OCI-LY7 (cell line): ENCODE measurements at regions of chr10 and their contacts with region 1.

Region 1: DNA sequence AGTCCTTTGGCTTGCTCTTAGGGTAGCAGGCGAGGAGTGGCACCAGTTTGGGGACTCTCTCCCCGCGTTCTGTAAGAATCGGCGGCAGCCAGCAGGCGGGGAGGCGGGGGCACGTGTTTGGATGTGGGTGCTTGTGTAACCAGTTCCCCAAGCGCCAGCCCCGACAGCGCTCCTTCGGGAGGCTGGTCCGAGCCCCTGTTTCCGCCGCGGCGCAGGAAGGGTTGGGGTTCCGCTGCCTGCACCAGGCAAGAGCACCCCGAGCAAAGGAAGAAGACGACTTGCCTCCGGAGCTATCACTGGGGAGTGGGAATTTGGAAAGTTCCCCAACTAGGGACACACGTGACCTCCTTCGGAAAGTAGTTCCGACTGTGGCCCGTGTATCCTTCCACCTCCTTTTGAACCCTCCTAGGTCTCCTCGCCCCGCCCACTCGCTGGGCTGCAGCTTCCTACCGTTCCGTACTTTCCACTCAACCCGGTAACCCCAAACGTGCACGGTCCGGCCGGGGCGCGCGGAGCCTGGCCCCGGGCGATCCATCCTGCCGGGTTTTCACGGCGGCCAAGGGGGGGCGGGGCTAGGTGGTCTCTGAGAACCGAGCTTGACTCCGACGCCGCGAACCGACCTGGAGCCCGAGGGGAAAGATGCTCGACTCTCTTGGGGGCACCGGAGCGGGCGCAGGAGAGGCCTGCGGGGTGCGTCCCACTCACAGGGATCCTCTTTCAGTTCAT is 1.2 kb downstream of the KLLN start:
- DNase-seq: peak; percentile 99
- H3K4me3 ChIP-seq: peak overlapping the region; percentile 96
- H3K27ac ChIP-seq: peak overlapping the region; percentile 94
- H3K4me1 ChIP-seq: peaks cover 19% of the 10 kb centered on the region
- CTCF ChIP-seq: no peak; the same call in 1 of the 2 replicates

Region 2: GRCh38 chr10:87817609-87818504 is 44.3 kb before region 1 on chr10 and contains the start of gene ATAD1:
- CTCF ChIA-PET with region 1: interaction called, 4 read pairs
- POLR2A ChIA-PET with region 1: interaction called, 11 read pairs
- intact Hi-C with region 1: loop called (anchors 1 kb)
- DNase-seq: peak; percentile 93
- H3K4me3 ChIP-seq: peak within 1 kb of the TSS; percentile 86
- H3K27ac ChIP-seq: peak within 1 kb of the TSS; percentile 79
- H3K4me1 ChIP-seq: peaks cover 28% of the 10 kb centered on the region
- CTCF ChIP-seq: peak; percentile 28; the same call in 1 of the 2 replicates
- total RNA-seq, gene ATAD1: 17.7 and 19.6 TPM in 2 replicates

Region 3: GRCh38 chr10:88080213-88080612 is 218.1 kb after region 1 on chr10:
- CTCF ChIA-PET with region 1: interaction called, 3 read pairs
- POLR2A ChIA-PET with region 1: interaction called, 11 read pairs
- intact Hi-C with region 1: no loop called
- DNase-seq: peak; percentile 44
- H3K4me3 ChIP-seq: peak overlapping the region; percentile 26
- H3K27ac ChIP-seq: peak overlapping the region; percentile 13
- H3K4me1 ChIP-seq: peaks cover 67% of the 10 kb centered on the region
- CTCF ChIP-seq: no peak

Region 4: GRCh38 chr10:88216976-88217375 is 354.9 kb after region 1 on chr10:
- CTCF ChIA-PET with region 1: no interaction called
- POLR2A ChIA-PET with region 1: no interaction called
- intact Hi-C with region 1: loop called (anchors 5 kb)
- DNase-seq: peak; percentile 62
- H3K4me3 ChIP-seq: no peak overlapping the region
- H3K27ac ChIP-seq: no peak overlapping the region
- H3K4me1 ChIP-seq: no peaks in the 10 kb centered on the region
- CTCF ChIP-seq: no peak; the same call in 1 of the 2 replicates

Region 5: GRCh38 chr10:88318803-88319202 is 456.7 kb after region 1 on chr10:
- CTCF ChIA-PET with region 1: no interaction called
- POLR2A ChIA-PET with region 1: no interaction called
- intact Hi-C with region 1: loop called (anchors 5 kb)
- DNase-seq: peak; percentile 65
- H3K4me3 ChIP-seq: no peak overlapping the region
- H3K27ac ChIP-seq: no peak overlapping the region
- H3K4me1 ChIP-seq: peaks cover 37% of the 10 kb centered on the region
- CTCF ChIP-seq: peak; percentile 78

Region 6: GRCh38 chr10:88553116-88553752 is 691.1 kb after region 1 on chr10:
- CTCF ChIA-PET with region 1: interaction called, 3 read pairs
- POLR2A ChIA-PET with region 1: interaction called, 5 read pairs
- intact Hi-C with region 1: loop called (anchors 1 kb)
- DNase-seq: peak; percentile 77
- H3K4me3 ChIP-seq: no peak overlapping the region
- H3K27ac ChIP-seq: no peak overlapping the region
- H3K4me1 ChIP-seq: no peaks in the 10 kb centered on the region
- CTCF ChIP-seq: peak; percentile 97